Heart left ventricle (tissue), 16 donors: ENCODE measurements at regions of chr7 and their contacts with region 1.

Region 1: DNA sequence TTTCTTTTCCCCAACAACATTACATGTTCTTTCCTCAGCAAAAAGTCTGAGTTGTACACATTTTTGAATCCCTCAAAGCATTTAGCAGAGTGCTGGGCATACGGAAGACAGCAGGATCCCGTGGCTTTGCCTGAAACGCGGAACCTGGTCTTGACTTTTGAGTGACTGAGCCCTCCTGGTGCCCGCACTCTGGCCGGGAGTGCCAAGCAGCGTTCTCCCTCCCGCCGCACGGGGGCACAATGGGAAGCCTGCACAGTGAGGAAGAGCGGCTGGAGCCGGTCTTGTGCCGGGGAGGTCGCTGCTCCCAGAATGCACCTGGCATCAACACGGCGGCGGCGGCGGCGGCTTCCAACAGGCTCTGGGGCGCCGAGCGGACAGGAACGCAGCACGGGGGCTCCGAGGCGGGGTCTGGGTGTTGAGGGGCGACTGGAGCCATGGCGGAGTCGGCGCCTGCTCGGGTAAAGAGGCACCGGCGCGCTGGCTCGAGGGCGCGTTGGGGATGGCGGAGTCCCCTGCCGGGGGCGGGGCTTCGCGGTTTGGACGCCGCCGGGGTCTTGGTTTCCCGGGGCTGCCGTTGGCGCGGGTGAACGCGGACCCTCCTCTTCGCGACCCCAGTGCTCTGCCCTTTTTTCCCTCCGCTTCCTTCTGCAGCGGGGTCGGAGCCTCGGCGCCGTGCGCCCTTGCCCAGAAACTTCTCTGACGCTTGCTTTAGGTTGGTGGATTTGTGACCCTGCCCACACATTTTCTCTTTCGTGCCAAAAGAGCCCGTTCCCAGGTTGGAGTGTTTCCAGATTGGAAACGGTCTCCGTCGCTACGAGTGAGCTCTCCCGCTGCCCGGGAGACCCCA is at the start of gene ZNF212:
- DNase-seq: peak; percentile 89 to 94 (median 92)
- ATAC-seq: peak; percentile 98 to 100 (median 100)
- H3K4me3 ChIP-seq: peak within 1 kb of the TSS; percentile 69 to 99 (median 89)
- H3K27ac ChIP-seq: peak within 1 kb of the TSS in 10 of 12 donors; percentile 20 to 83 (median 74)
- H3K4me1 ChIP-seq: peaks cover 3 to 24% (median 15%) of the 10 kb centered on the region in 12 donors
- H3K27me3 ChIP-seq: no peaks in the 10 kb centered on the region
- CTCF ChIP-seq: peak; percentile 70 to 96 (median 88)
- POLR2A ChIP-seq: peak in 1 of 2 donors; percentile 48
- total RNA-seq, gene ZNF212: 3.4 to 6.3 (median 4.3) TPM

Region 2: DNA sequence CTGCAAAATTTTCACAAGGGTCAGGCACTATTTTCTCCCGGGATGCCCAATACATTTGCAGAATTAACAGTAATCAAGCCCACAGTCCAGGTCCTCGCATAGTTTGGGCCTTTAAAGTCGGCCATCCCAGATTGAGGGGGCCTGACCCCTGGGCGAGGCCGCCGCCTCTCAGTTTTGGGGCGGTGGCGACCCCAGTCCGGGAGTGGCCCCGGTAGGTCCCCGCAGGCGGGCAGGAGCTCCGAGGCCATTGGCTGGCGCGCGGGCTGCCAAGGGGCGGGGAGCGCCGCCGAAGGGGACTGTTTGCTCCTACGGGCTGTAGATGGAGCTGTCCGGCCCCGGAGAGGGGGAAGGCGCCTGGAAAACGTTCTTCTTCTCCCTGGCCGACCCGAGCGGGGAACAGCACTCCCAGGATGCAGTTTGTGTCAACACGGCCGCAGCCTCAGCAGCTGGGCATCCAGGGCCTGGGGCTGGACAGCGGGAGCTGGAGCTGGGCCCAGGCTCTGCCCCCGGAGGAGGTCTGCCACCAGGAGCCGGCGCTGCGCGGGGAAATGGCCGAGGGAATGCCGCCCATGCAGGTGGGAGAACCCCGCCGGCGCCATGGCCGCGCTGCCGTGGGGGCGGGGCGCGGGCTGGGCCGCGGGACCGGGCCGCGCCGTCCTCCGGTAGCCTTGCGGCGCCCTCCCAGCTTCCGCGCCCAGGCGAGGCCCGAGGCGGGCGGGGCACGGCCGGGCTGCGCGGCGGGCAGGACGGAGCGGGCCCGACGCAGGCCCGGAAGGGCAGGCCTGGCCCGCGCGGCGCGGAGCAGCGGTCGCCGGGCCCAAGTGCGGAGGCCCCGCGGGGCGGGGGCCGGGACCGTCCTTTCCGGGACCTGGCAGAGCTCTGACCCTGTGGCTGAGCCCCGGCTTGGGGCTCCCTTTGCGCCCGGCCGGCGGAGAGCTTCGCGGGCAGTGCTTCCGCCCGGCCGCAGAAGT is 44.1 kb before region 1 on chr7 and contains the start of gene ZNF282:
- intact Hi-C with region 1: loop called in 1 of 10 experiments (anchors 2 kb)
- DNase-seq: peak; percentile 89 to 94 (median 93)
- ATAC-seq: peak; percentile 96 to 99 (median 98)
- H3K4me3 ChIP-seq: peak within 1 kb of the TSS; percentile 71 to 99 (median 82)
- H3K27ac ChIP-seq: peak within 1 kb of the TSS; percentile 76 to 97 (median 90)
- H3K4me1 ChIP-seq: peaks cover 0 to 25% (median 22%) of the 10 kb centered on the region in 12 donors
- H3K27me3 ChIP-seq: peaks cover 0 to 3% (median 0%) of the 10 kb centered on the region in 9 donors
- CTCF ChIP-seq: peak; percentile 43 to 92 (median 64)
- POLR2A ChIP-seq: peak in 1 of 2 donors; percentile 66
- total RNA-seq, gene ZNF282: 11.0 to 21.4 (median 13.0) TPM